ENCODE measurements at regions of chr7 and their contacts with region 1.

Region 1: GRCh38 chr7:34486371-34486770 is 171.6 kb upstream of the NPSR1 start:
- DNase-seq: no peak
- H3K4me3 ChIP-seq: no peak overlapping the region
- H3K27ac ChIP-seq: no peak overlapping the region
- H3K4me1 ChIP-seq: peaks cover 1 to 9% (median 5%) of the 10 kb centered on the region in 4 experiments; a peak in 4 of 7 replicates
- H3K27me3 ChIP-seq: peaks cover 0 to 1% (median 0%) of the 10 kb centered on the region in 4 experiments; a peak in 1 of 7 replicates
- CTCF ChIP-seq: no peak
- EP300 ChIP-seq: no peak
- POLR2A ChIP-seq: no peak
- RAD21 ChIP-seq: no peak

Region 2: GRCh38 chr7:34497141-34497777 is 10.9 kb after region 1 on chr7:
- CTCF ChIA-PET with region 1: interaction called, 18 read pairs
- POLR2A ChIA-PET with region 1: no interaction called
- DNase-seq: peak in 1 of 2 experiments; percentile 68
- H3K4me3 ChIP-seq: no peak overlapping the region
- H3K27ac ChIP-seq: no peak overlapping the region
- H3K4me1 ChIP-seq: no peaks in the 10 kb centered on the region
- H3K27me3 ChIP-seq: no peaks in the 10 kb centered on the region
- CTCF ChIP-seq: peak; percentile 32 to 60 (median 45)
- EP300 ChIP-seq: no peak
- POLR2A ChIP-seq: no peak
- RAD21 ChIP-seq: peak in 1 of 2 experiments; percentile 15; a peak in 1 of 4 replicates

Measured in H1 (cell line).